Activated CD4-positive, alpha-beta T cell treated with anti-CD3 and anti-CD28 coated beads, Interleukin-2, amount 10 ng/mL, durations not matched to agents 24 days and 14 days (primary cell): ENCODE measurements at regions of chr6 and their contacts with region 1.

Region 1: GRCh38 chr6:15245361-15246216 is at the start of gene JARID2:
- DNase-seq: peak; percentile 98
- H3K4me3 Mint-ChIP-seq: peak within 1 kb of the TSS; percentile 99
- H3K27ac Mint-ChIP-seq: peak within 1 kb of the TSS; percentile 95
- H3K4me1 Mint-ChIP-seq: peaks cover 28% of the 10 kb centered on the region
- H3K27me3 Mint-ChIP-seq: peaks cover 2% of the 10 kb centered on the region
- total RNA-seq, gene JARID2: 48.7 and 49.5 TPM in 2 replicates

Region 2: DNA sequence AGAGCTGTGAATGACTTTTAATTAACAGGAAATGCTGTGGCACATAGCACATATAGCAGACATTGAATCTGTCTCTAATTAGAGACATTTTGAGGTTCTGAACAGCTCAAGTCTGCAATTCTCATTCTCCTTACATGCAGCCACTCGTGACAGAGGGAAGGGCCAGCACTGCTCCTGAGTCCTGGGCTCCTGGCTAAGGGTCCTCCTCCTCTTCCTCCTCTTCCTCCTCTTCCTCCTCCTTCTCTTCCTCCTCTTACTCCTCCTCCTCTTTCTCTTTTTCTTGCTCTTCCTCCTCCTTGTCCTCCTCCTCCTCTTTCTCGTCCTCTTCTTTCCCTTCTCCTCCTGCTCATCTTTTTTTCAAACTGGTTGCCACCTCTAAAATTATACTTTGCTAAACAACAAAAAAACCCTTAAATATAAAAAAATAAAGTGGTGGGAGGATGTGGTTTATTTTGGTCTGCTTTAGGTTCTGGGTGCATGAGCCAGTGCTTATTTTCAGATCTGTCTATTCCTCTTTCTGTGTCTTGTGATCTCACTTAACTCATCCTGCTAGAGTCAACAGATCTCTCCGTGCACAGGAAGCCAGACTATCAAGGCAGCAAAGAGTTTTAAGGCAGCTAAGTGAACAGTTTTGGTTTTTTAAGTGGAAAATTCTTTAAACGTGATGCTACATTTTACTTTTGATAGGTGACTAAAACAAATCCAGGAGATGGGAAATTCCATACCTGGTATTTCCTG is 968.8 kb before region 1 on chr6:
- intact Hi-C with region 1: loop called (anchors 10 kb)
- DNase-seq: peak; percentile 84
- H3K4me3 Mint-ChIP-seq: peak overlapping the region; percentile 71
- H3K27ac Mint-ChIP-seq: peak overlapping the region; percentile 92
- H3K4me1 Mint-ChIP-seq: peaks cover 46% of the 10 kb centered on the region
- H3K27me3 Mint-ChIP-seq: no peaks in the 10 kb centered on the region

Region 3: DNA sequence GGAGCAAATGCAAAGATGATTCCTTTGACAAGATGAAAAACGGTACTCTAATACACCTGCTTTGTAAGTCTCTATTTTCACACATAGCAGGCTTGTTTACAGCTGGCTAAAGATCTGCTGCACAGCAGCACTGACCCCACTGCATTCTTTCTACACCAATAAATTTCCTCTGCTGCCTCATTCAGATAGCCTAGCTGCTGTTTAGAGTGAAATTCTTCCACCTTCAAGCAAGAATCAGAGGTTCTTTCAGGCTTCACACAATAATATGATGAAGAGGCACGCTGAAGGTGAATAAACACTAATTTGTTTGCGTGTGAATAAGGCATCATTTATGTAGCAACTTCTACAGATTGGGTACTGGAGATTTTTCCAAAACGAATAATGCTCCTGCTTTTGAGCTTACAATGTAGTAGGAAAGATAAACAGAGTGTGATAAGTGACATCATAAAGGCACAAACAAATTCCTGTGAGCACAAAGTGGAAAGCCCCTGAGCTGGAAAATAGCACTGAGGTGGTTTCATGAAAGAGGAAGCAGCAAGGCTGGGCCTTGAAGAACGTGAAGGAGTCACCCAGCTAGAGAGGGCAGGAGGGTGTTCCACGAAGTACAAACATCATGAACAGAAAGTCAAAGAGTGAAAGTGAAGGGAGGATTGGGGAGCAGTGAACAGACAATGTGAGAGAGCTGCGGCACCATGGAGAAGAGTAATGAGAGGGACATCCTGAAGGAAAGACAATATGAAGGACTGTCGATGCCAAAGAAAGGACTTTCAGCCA is 584.6 kb before region 1 on chr6:
- intact Hi-C with region 1: loop called (anchors 5 kb)
- DNase-seq: peak; percentile 91
- H3K4me3 Mint-ChIP-seq: no peak overlapping the region
- H3K27ac Mint-ChIP-seq: no peak overlapping the region
- H3K4me1 Mint-ChIP-seq: peaks cover 46% of the 10 kb centered on the region
- H3K27me3 Mint-ChIP-seq: peaks cover 7% of the 10 kb centered on the region

Region 4: DNA sequence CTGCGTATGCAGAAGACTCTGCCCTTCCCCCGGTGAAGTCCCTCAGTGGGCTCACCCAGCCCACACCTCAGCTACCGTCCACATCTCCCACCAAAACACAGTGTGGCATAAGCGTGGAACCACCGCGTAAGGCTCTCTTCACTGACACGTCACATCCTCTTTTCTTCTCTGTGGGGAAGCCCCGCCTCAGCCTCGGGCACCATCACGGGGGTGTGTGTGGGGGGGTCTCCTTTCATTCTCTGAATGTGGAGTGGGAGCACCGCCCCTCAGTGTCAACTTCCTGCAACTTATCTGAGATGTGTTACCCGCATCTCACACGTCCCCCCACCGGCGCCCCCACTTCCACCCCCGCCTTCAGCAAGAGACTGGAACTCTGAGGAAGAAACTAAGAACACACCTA is 388.1 kb before region 1 on chr6:
- intact Hi-C with region 1: loop called (anchors 1 kb)
- DNase-seq: peak; percentile 82
- H3K4me3 Mint-ChIP-seq: peak overlapping the region; percentile 71
- H3K27ac Mint-ChIP-seq: peak overlapping the region; percentile 98
- H3K4me1 Mint-ChIP-seq: peaks cover 35% of the 10 kb centered on the region
- H3K27me3 Mint-ChIP-seq: no peaks in the 10 kb centered on the region

Region 5: DNA sequence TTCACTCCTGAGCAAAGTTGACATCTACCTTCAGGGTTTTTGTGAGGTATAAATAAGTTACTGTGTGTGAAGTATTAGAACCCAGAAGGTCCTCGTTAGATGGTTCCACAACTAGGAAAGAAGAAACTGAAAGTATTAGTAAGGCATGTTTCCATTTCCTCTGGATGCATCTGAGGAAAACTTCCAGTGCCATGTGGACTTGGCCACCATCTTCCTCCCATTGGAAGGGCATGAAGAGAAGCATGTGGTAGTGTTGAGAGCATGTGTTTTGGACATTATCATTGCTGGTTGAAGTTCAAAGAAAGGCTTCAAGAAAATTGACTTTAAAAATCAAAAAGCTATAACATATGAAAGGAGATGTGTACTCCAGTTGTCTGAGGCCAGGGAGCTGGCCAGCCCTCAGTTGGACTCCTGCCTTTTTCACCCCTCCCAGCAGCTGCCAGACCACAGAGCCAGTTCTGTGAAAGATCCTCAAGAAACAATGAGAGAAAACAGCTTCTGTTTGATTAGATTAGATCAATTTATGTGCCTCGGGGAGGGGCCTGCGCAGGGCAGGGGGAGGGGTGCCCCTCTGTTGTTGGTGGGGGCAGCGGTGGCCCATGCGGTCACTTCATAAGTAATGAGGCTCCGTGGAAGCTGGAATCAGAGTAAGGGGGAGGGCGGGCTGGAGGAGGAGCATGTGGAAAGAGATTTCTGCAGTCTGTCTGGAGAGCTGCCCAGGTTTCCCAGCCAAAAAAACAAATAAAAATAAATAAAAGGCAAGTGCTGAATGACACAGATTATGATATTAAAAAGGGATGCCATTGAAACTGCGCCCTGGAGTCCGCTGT is 154.3 kb after region 1 on chr6:
- intact Hi-C with region 1: loop called (anchors 5 kb)
- DNase-seq: peak; percentile 63
- H3K4me3 Mint-ChIP-seq: peak overlapping the region; percentile 78
- H3K27ac Mint-ChIP-seq: peak overlapping the region; percentile 81
- H3K4me1 Mint-ChIP-seq: peaks cover 66% of the 10 kb centered on the region
- H3K27me3 Mint-ChIP-seq: no peaks in the 10 kb centered on the region

Region 6: GRCh38 chr6:15491255-15491985 is 245.8 kb after region 1 on chr6:
- intact Hi-C with region 1: loop called (anchors 2 kb)
- DNase-seq: peak; percentile 91
- H3K4me3 Mint-ChIP-seq: no peak overlapping the region
- H3K27ac Mint-ChIP-seq: peak overlapping the region; percentile 74
- H3K4me1 Mint-ChIP-seq: peaks cover 38% of the 10 kb centered on the region
- H3K27me3 Mint-ChIP-seq: no peaks in the 10 kb centered on the region